Activated CD8-positive, alpha-beta T cell treated with anti-CD3 and anti-CD28 coated beads, Interleukin-2, amount 10 ng/mL, durations not matched to agents 7 days and 5 days (primary cell): ENCODE measurements at regions of chr19 and their contacts with region 1.

Region 1: DNA sequence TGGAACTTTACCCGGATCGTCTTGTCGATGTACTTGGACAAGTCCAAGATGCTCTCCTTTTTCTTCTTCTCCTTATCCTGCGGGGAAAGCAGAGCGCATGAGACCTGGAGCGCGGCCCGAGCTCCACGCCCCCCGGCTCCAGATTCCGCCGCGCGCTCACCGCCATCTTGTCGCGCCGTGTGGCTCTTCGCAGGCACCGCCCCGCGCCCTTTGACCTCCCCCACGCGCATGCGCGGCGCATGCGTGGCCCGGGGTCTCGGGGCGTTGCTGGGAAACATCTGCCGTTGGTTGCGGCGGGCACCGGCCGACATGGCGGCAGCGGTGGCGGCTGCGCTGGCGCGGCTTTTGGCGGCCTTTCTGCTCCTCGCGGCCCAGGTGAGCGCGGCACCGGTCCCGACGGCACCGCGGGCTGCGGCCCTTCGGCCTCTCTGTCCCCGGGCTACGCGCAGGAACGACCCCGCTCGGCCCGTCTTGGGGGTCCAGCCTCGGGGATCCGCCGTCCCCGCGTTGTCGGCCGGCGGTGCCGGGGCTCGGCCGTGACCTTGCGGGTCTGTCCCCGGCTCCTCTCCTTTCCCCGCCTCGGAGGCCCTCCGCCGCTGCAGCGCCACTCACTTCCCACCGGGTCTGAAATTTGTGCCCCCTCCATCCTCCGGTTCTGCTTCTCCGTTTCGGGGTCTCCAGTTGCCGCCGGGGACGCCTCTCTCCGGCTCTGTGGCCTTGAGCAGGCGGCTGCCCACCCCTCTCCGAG is at the starts of genes LSM7 and SPPL2B:
- DNase-seq: peak; percentile 93
- ATAC-seq: peak; percentile 63
- H3K4me3 Mint-ChIP-seq: peak within 1 kb of the TSS; percentile 96
- H3K27ac Mint-ChIP-seq: peak within 1 kb of the TSS; percentile 99
- H3K4me1 Mint-ChIP-seq: peaks cover 73% of the 10 kb centered on the region
- H3K27me3 Mint-ChIP-seq: no peaks in the 10 kb centered on the region
- total RNA-seq, gene LSM7: 144 to 146 TPM
- total RNA-seq, gene SPPL2B: 73.5 to 80.7 TPM

Region 2: GRCh38 chr19:2269244-2269947 is 59.2 kb before region 1 on chr19:
- CTCF ChIA-PET with region 1: interaction called, 3 read pairs
- POLR2A ChIA-PET with region 1: interaction called, 10 read pairs
- DNase-seq: peak; percentile 99
- ATAC-seq: peak; percentile 78
- H3K4me3 Mint-ChIP-seq: peak overlapping the region; percentile 88
- H3K27ac Mint-ChIP-seq: peak overlapping the region; percentile 88
- H3K4me1 Mint-ChIP-seq: peaks cover 45% of the 10 kb centered on the region
- H3K27me3 Mint-ChIP-seq: no peaks in the 10 kb centered on the region

Region 3: DNA sequence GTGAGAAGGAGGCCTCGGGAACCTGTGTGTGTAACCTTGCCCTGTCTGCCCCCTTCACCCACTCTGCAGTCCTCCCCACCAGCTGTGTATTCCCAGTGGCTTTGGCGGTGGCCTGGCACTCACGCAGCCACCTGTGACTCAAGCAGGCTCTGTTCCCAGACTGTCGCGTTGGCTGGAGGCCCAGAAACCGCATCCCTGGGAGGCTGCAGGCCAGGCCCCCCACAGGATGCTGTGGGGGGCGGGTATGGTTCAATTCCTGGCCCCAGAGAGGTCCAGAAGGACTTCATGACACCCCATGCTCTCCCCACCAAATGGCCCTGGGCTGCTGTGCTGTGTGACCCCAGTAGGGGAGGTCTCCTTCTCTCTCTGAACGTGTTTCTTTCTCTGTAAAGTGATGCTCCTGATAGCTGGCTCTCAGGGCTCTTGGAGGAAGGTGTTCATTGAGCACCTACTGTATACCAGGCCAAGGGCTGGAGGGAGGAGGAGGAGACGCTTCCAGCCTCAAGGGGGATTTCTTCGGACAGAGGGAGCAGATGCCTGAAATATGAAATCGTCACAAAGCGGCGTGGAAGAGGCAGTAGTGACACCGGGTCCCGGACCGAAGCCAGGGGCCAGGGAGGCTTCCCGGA is 18.7 kb before region 1 on chr19:
- CTCF ChIA-PET with region 1: no interaction called
- POLR2A ChIA-PET with region 1: interaction called, 10 read pairs
- DNase-seq: no peak
- ATAC-seq: no peak
- H3K4me3 Mint-ChIP-seq: no peak overlapping the region
- H3K27ac Mint-ChIP-seq: no peak overlapping the region
- H3K4me1 Mint-ChIP-seq: peaks cover 2% of the 10 kb centered on the region
- H3K27me3 Mint-ChIP-seq: peaks cover 34% of the 10 kb centered on the region

Region 4: GRCh38 chr19:2359992-2360685 is 31.6 kb after region 1 on chr19 and contains the start of gene TMPRSS9:
- CTCF ChIA-PET with region 1: no interaction called
- POLR2A ChIA-PET with region 1: no interaction called
- DNase-seq: no peak
- ATAC-seq: no peak
- H3K4me3 Mint-ChIP-seq: no peak within 1 kb of the TSS
- H3K27ac Mint-ChIP-seq: no peak within 1 kb of the TSS
- H3K4me1 Mint-ChIP-seq: peaks cover 5% of the 10 kb centered on the region
- H3K27me3 Mint-ChIP-seq: peaks cover 10% of the 10 kb centered on the region
- total RNA-seq, gene TMPRSS9: not detected